WTC11 (cell line): ENCODE measurements at regions of chr19 and their contacts with region 1.

Region 1: GRCh38 chr19:17932485-17933338 is at the start of gene CCDC124:
- DNase-seq: peak; percentile 94
- ATAC-seq: peak; percentile 85
- H3K4me3 Mint-ChIP-seq: peak within 1 kb of the TSS; percentile 88
- H3K27ac Mint-ChIP-seq: peak within 1 kb of the TSS; percentile 99
- H3K4me1 Mint-ChIP-seq: peaks cover 15% of the 10 kb centered on the region
- H3K27me3 Mint-ChIP-seq: no peaks in the 10 kb centered on the region; the same call in 1 of the 2 replicates
- CTCF ChIP-seq: peak; percentile 54
- total RNA-seq, gene CCDC124: 152 to 159 TPM (median 156 TPM) in 3 replicates

Region 2: DNA sequence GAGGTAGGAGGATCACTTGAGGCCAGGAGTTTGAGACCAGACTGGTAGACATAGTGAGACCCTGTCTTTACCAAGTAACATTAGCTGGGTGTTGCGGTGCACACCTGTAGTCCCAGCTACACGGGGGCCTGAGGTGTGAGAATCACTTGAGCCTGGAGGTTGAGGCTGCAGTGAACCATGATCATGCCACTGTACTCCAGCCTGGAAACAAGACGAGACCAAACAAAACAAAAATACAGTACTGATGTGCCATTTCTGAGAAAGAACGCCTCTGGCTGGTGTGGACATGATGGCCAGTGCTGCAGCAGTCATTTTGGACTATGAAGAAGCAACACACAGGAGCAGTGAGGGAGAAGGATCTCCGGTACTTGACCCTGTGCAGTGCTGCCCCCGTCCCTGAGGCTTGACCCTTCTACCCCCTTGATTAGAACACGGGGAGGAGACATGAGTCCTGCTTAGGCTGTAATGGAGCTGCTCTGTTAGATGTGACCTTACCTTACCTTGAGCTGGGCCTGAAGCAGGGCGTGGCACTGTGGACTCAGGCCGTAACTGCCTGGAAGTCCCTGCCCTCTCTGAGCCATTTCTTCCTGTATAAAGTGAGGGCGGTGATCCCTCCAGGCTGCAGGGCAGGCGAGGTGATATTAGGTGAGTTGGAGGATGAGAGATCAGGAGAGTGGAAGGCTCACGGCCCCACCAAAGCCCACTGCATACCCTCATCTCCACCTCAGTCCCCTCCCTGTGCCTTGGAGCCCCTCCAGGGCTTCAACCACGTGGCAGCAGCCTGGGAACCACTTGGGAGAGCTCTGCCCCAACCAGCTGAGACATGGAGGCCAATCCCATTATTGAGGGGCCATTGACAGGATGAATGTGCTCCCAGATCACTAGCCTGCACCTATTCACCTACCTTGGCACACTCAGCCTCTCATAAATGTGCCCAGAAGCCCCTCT is 67.1 kb before region 1 on chr19:
- CTCF ChIA-PET with region 1: interaction called, 173 read pairs
- POLR2A ChIA-PET with region 1: interaction called, 23 read pairs
- DNase-seq: no peak
- ATAC-seq: peak; percentile 43
- H3K4me3 Mint-ChIP-seq: no peak overlapping the region
- H3K27ac Mint-ChIP-seq: peak overlapping the region; percentile 74
- H3K4me1 Mint-ChIP-seq: peaks cover 37% of the 10 kb centered on the region
- H3K27me3 Mint-ChIP-seq: peaks cover 2% of the 10 kb centered on the region
- CTCF ChIP-seq: no peak

Region 3: DNA sequence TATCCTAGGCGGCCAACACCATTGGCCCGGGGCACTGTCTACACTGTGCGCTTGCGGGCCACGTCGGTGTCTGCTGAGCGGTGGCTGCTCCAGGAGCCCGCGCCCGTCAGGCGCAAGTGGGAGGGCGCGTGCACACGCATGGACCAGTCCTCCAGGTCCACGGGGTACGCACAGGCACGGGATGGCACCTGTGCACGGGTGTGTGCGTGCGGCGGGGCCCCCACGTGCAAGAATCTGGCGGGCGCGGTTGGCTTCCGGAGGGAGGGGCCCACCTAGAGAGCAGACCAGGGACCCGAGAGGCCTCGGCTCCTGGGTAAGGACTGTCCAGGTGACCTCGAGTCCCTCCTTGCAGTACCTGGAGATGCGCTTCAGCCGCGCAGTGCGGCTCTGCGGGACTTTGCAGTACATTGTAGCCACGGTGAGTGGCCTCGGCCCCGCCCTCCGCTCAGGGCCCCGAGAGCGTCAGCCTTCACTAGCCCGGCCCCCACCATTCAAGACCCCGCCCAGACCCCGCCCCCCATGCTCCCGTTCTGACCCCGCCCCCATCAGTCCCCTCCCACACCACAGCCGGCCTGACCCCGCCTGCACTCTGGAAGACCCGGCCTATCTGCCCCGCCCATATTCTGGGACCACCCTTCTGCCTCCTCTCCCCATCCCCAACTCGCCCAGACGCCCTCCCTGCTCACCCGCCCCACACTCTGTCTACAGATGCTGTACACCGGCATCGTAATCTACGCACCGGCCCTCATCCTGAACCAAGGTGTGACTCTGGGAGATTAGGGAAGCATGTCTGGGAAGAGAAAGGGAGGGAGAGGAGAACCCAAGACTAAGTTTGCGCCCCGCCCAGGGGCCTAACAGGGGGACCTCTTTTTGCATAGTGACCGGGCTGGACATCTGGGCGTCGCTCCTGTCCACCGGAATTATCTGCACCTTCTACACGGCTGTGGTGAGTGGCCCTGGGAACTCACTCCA is 58.6 kb before region 1 on chr19:
- CTCF ChIA-PET with region 1: interaction called, 173 read pairs
- POLR2A ChIA-PET with region 1: interaction called, 23 read pairs
- DNase-seq: peak; percentile 88
- ATAC-seq: peak; percentile 76
- H3K4me3 Mint-ChIP-seq: peak overlapping the region; percentile 68
- H3K27ac Mint-ChIP-seq: no peak overlapping the region
- H3K4me1 Mint-ChIP-seq: peaks cover 12% of the 10 kb centered on the region
- H3K27me3 Mint-ChIP-seq: peaks cover 13% of the 10 kb centered on the region
- CTCF ChIP-seq: no peak

Region 4: DNA sequence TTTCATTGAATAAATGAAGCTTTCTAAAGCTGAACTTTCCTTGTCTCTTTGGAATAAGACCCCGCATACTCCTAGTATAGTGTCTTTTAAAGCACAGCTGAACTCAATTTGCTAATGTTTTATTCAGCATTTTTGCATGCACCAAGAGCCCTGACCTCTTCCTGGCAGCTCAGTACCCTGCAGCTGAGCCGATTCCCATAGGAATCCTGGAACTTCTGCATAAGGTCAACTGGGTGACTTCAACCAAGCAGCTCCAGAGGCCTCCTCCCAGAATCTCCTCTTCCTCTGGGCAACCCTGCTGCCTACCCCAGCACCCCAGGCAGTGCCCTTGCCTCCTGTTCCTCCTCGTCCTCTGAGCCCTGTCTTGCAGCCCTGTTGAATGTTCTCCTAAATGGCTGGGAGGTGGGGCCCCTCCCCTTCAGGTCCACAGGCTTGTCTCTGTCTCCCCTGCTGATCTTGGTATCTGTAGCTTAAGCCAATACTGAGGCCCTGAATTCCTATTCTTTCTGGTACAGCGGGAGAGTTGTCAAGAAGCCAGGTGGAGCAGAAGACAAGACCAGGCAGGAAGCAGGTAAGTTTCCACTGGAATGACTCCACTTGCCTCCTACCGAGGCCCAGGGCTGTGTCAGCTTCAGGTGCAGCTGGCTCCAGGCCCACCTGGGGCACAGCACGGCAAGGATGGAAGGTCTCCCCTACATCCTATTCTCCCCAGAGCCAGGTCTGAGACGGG is 23.5 kb before region 1 on chr19:
- CTCF ChIA-PET with region 1: interaction called, 23 read pairs
- POLR2A ChIA-PET with region 1: interaction called, 4 read pairs
- DNase-seq: peak; percentile 23
- ATAC-seq: peak; percentile 87
- H3K4me3 Mint-ChIP-seq: no peak overlapping the region; the same call in 1 of the 2 replicates
- H3K27ac Mint-ChIP-seq: peak overlapping the region; percentile 95
- H3K4me1 Mint-ChIP-seq: peaks cover 8% of the 10 kb centered on the region
- H3K27me3 Mint-ChIP-seq: peaks cover 5% of the 10 kb centered on the region
- CTCF ChIP-seq: no peak

Region 5: GRCh38 chr19:17947815-17948513 is 15.3 kb after region 1 on chr19:
- CTCF ChIA-PET with region 1: interaction called, 52 read pairs
- POLR2A ChIA-PET with region 1: interaction called, 27 read pairs
- DNase-seq: peak; percentile 97
- ATAC-seq: peak; percentile 27
- H3K4me3 Mint-ChIP-seq: peak overlapping the region; percentile 77
- H3K27ac Mint-ChIP-seq: no peak overlapping the region
- H3K4me1 Mint-ChIP-seq: peaks cover 28% of the 10 kb centered on the region
- H3K27me3 Mint-ChIP-seq: peaks cover 41% of the 10 kb centered on the region
- CTCF ChIP-seq: no peak

Region 6: DNA sequence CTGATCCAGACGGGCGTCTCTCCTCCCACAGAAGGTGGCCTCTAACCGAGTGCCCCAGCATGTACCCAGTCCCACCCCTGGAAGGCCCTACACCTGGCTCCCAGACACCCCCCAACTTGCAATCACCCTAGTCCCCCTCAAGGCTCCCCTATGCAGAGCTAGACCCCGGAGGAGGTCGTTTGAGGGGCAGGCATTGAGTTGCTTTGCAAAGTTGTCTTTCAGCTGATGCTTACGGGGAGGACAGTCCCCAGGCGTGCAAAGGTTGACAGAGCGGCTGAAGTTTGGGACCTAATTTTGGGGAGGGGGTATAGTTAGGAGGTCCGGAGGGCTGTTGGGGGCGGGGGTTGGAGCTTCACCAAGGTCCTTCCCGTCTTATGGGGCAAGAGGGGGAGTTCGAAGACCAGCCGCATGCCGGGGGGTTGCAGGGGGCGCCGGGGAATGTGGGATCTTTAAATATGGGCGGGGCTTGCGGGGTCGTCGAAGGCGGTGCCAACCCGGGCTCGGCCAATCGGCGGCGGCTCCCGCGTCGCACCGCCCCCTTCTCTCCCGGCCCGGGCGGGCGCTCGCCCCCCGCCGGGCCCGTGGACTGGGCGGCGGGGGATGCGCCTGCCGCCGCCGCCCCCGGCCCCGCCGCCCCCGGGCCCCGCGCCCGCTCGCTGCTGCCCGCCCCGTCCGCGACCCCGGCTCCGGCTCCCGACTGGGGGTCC is 34.0 kb after region 1 on chr19 and contains the start of gene KCNN1:
- CTCF ChIA-PET with region 1: interaction called, 10 read pairs
- POLR2A ChIA-PET with region 1: no interaction called
- DNase-seq: peak; percentile 76
- ATAC-seq: peak; percentile 77
- H3K4me3 Mint-ChIP-seq: peak within 1 kb of the TSS; percentile 79
- H3K27ac Mint-ChIP-seq: no peak within 1 kb of the TSS
- H3K4me1 Mint-ChIP-seq: peaks cover 19% of the 10 kb centered on the region
- H3K27me3 Mint-ChIP-seq: peaks cover 14% of the 10 kb centered on the region
- CTCF ChIP-seq: no peak
- total RNA-seq, gene KCNN1: 15.3 to 18.0 TPM (median 17.2 TPM) in 3 replicates

Region 7: GRCh38 chr19:18000935-18001778 is 68.4 kb after region 1 on chr19:
- CTCF ChIA-PET with region 1: interaction called, 201 read pairs
- POLR2A ChIA-PET with region 1: interaction called, 9 read pairs
- DNase-seq: peak; percentile 63
- ATAC-seq: peak; percentile 39
- H3K4me3 Mint-ChIP-seq: peak overlapping the region; percentile 71
- H3K27ac Mint-ChIP-seq: no peak overlapping the region
- H3K4me1 Mint-ChIP-seq: peaks cover 6% of the 10 kb centered on the region
- H3K27me3 Mint-ChIP-seq: peaks cover 49% of the 10 kb centered on the region
- CTCF ChIP-seq: no peak